HepG2 (cell line): ENCODE measurements at regions of chr2 and their contacts with region 1.

Region 1: GRCh38 chr2:86440631-86441391 is at the start of gene KDM3A:
- DNase-seq: peak; percentile 99
- ATAC-seq: peak; percentile 92
- H3K4me3 ChIP-seq: peak within 1 kb of the TSS; percentile 70 to 97 (median 81)
- H3K27ac ChIP-seq: peak within 1 kb of the TSS; percentile 98
- H3K4me1 ChIP-seq: peaks cover 36% of the 10 kb centered on the region
- H3K27me3 ChIP-seq: peaks cover 0 to 4% of the 10 kb centered on the region in 2 experiments; a peak in 1 of 5 replicates
- CTCF ChIP-seq: no peak
- EP300 ChIP-seq: peak; percentile 62 to 75; a peak in 3 of 4 replicates
- POLR2A ChIP-seq: peak in 1 of 2 experiments; percentile 40; a peak in 1 of 4 replicates
- RAD21 ChIP-seq: peak; percentile 46; the same call in 1 of the 2 replicates
- total RNA-seq, gene KDM3A: 21.0 and 30.8 TPM in 2 replicates

Region 2: GRCh38 chr2:86105252-86105968 is 335.4 kb before region 1 on chr2 and contains the start of gene POLR1A:
- CTCF ChIA-PET with region 1: no interaction called
- POLR2A ChIA-PET with region 1: interaction called, 11 read pairs
- in situ Hi-C with region 1: no loop called
- intact Hi-C with region 1: loop called (anchors 5 kb)
- DNase-seq: peak; percentile 94
- ATAC-seq: peak; percentile 98
- H3K4me3 ChIP-seq: peak within 1 kb of the TSS; percentile 88 to 96 (median 93)
- H3K27ac ChIP-seq: peak within 1 kb of the TSS; percentile 81
- H3K4me1 ChIP-seq: peaks cover 46% of the 10 kb centered on the region
- H3K27me3 ChIP-seq: peaks cover 0 to 4% of the 10 kb centered on the region in 2 experiments; a peak in 2 of 5 replicates
- CTCF ChIP-seq: no peak
- EP300 ChIP-seq: no peak
- POLR2A ChIP-seq: no peak
- RAD21 ChIP-seq: no peak
- total RNA-seq, gene POLR1A: 39.9 and 61.1 TPM in 2 replicates

Region 3: DNA sequence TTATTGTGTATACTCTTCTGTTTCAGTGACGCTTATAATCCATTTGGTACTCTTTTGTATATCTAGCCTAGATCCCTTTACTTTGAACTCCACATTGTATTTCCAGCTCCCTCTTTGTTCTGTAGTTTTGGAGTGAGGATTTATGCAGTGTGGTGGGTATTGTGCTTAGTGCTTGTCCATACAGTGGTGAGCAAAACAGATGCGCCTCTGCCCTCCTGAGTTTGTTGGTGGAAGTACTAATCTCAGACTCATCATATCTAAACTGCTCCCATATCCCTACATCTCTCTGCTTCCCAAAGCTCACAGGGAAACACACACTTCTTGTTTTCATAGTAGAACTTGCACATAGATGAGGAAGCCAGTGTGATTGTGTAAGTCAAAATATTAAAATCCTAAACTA is 322.7 kb before region 1 on chr2:
- CTCF ChIA-PET with region 1: no interaction called
- POLR2A ChIA-PET with region 1: no interaction called
- in situ Hi-C with region 1: no loop called
- intact Hi-C with region 1: no loop called
- DNase-seq: no peak
- ATAC-seq: peak; percentile 62
- H3K4me3 ChIP-seq: no peak overlapping the region
- H3K27ac ChIP-seq: no peak overlapping the region
- H3K4me1 ChIP-seq: peaks cover 15% of the 10 kb centered on the region
- H3K27me3 ChIP-seq: no peaks in the 10 kb centered on the region
- CTCF ChIP-seq: peak; percentile 13; the same call in 1 of the 2 replicates
- EP300 ChIP-seq: no peak
- POLR2A ChIP-seq: no peak
- RAD21 ChIP-seq: no peak

Region 4: DNA sequence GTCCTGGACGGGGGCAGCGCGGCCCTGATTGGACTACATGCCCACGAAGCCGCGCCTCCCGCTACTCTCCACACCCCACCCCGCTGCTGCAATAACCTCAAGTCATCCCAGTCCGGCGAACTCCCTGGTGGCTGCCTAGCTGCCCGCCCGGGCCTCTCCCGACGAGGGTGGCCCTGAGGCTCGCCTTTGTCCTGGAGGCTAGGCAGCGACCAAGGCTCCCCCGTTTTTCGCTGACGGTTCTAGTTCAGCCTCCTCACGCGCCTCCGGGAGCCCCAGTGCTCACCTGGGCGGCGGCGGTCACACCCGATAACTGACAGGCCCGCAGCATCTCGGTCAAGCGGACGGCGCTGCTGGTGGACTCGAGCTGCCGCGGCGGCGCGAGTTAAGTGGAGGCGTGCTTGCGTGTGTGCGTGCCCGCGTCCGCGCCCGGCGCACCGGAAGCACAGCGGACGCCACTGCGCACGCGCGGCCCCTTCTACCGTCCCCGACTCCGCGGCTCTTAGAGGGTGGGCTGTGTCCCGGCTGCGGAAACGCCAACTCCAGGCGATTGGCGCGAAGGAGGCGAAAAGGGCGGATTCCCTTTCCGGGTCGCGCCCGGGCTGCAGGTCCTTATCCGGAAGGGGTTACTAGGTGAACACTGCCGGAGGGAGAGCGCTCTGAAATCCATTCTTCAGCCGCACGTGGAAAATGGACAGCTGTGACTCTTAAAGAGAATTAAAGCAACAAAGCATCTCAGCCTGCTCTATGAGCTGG is 245.6 kb before region 1 on chr2 and contains the start of gene IMMT:
- CTCF ChIA-PET with region 1: no interaction called
- POLR2A ChIA-PET with region 1: interaction called, 18 read pairs
- in situ Hi-C with region 1: no loop called
- intact Hi-C with region 1: loop called (anchors 1 kb)
- DNase-seq: peak; percentile 97
- ATAC-seq: peak; percentile 95
- H3K4me3 ChIP-seq: peak within 1 kb of the TSS; percentile 81 to 96 (median 91)
- H3K27ac ChIP-seq: peak within 1 kb of the TSS; percentile 95
- H3K4me1 ChIP-seq: peaks cover 53% of the 10 kb centered on the region
- H3K27me3 ChIP-seq: no peaks in the 10 kb centered on the region; a peak in 1 of 5 replicates
- CTCF ChIP-seq: no peak; the same call in 1 of the 2 replicates
- EP300 ChIP-seq: 0 out of 4 replicates have a peak, but pooled peaks of 1 of the 2 experiments have one; percentile 63
- POLR2A ChIP-seq: peak; percentile 92 to 95
- RAD21 ChIP-seq: peak; percentile 67
- total RNA-seq, gene IMMT: 119 and 174 TPM in 2 replicates

Region 5: DNA sequence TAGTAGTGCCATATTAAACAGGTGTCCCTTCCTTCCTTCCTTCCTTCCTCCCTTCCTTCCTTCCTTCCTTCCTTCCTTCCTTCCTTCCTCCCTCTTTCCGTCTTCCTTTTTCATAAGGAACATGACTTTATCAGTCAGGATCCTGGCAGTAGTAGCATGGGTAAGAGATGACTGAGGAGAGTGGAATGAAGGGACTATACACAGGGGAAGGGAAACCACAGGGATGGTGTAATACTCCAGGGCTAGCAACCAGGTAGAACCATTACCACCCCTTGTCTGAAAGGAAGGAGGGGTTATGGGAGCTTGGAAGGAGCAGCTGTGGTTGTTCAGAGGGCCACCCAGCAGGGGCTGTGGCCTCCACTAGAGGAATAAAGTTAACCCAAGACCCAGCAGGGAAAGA is 22.9 kb before region 1 on chr2:
- CTCF ChIA-PET with region 1: no interaction called
- POLR2A ChIA-PET with region 1: no interaction called
- in situ Hi-C with region 1: no loop called
- intact Hi-C with region 1: no loop called
- DNase-seq: no peak
- ATAC-seq: no peak
- H3K4me3 ChIP-seq: no peak overlapping the region
- H3K27ac ChIP-seq: no peak overlapping the region
- H3K4me1 ChIP-seq: no peaks in the 10 kb centered on the region
- H3K27me3 ChIP-seq: peaks cover 0 to 22% of the 10 kb centered on the region in 2 experiments; a peak in 2 of 5 replicates
- CTCF ChIP-seq: no peak
- EP300 ChIP-seq: no peak
- POLR2A ChIP-seq: no peak
- RAD21 ChIP-seq: no peak

Region 6: DNA sequence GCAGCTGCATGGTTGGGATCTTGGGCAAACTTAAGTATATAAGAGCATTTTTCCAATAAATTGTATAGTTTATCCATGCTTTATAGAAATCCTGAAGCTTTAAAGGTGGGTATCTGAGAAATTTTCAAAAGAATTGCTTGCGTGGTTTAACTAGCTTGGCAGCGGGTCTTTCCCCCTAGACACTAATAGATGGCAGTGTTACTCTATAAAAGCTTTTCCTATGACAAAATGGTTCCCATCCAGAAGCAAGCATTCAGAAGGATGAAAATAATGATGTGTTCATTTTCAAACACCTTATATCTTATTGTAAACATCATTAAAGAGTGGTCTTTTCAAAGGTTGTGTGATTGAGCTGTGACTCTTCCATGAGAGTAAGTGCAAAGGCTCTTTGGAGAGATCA is 46.3 kb after region 1 on chr2:
- CTCF ChIA-PET with region 1: no interaction called
- POLR2A ChIA-PET with region 1: interaction called, 12 read pairs
- in situ Hi-C with region 1: no loop called
- intact Hi-C with region 1: no loop called
- DNase-seq: no peak
- ATAC-seq: no peak
- H3K4me3 ChIP-seq: no peak overlapping the region
- H3K27ac ChIP-seq: no peak overlapping the region
- H3K4me1 ChIP-seq: peaks cover 21% of the 10 kb centered on the region
- H3K27me3 ChIP-seq: no peaks in the 10 kb centered on the region
- CTCF ChIP-seq: peak; percentile 33; the same call in 1 of the 2 replicates
- EP300 ChIP-seq: no peak
- POLR2A ChIP-seq: no peak
- RAD21 ChIP-seq: no peak

Region 7: DNA sequence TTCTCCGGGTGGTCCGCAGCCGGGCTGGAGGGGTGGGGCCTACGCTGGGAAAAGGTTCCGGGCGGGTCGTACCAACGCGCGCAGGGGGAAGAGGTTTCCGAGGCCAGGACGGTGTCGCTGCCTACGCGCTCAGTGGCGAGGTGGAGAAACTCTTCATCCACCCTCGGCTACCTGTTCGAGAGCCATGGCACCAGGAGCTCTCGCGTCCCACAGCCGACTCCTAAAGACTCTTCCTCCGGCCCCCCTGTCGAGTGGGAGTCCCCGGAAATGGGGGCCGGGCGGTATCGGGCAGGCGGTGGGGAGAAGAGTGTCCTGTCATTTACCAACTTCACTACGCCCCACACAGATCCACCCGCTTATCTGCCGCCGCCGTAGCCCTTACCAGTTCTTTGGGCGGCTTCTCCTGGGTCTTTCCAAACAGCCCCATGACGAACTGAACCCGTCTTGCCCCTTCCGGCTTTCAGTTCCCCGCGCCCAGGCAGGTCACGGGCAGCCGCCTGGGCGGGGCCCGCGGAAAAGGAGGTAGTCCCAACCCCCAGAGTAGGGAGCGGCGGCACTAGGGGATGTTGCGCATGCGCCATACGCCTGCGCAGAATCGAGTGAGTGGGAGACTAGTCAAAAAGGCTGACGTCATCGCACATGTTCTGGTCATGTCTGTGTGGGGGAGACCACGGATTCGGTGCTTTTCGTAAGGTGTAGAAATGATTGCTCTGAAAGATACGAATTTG is 122.3 kb after region 1 on chr2 and contains the start of gene CHMP3:
- CTCF ChIA-PET with region 1: no interaction called
- POLR2A ChIA-PET with region 1: interaction called, 14 read pairs
- in situ Hi-C with region 1: no loop called
- intact Hi-C with region 1: loop called (anchors 1 kb)
- DNase-seq: peak; percentile 97
- ATAC-seq: peak; percentile 92
- H3K4me3 ChIP-seq: peak within 1 kb of the TSS; percentile 75 to 91 (median 88)
- H3K27ac ChIP-seq: peak within 1 kb of the TSS; percentile 97
- H3K4me1 ChIP-seq: peaks cover 40% of the 10 kb centered on the region
- H3K27me3 ChIP-seq: no peaks in the 10 kb centered on the region; a peak in 1 of 5 replicates
- CTCF ChIP-seq: 0 out of 2 replicates have a peak, but pooled peaks have one; percentile 16
- EP300 ChIP-seq: no peak
- POLR2A ChIP-seq: peak; percentile 79 to 87
- RAD21 ChIP-seq: 0 out of 2 replicates have a peak, but pooled peaks have one; percentile 28
- total RNA-seq, gene CHMP3: 114 and 154 TPM in 2 replicates

Region 8: DNA sequence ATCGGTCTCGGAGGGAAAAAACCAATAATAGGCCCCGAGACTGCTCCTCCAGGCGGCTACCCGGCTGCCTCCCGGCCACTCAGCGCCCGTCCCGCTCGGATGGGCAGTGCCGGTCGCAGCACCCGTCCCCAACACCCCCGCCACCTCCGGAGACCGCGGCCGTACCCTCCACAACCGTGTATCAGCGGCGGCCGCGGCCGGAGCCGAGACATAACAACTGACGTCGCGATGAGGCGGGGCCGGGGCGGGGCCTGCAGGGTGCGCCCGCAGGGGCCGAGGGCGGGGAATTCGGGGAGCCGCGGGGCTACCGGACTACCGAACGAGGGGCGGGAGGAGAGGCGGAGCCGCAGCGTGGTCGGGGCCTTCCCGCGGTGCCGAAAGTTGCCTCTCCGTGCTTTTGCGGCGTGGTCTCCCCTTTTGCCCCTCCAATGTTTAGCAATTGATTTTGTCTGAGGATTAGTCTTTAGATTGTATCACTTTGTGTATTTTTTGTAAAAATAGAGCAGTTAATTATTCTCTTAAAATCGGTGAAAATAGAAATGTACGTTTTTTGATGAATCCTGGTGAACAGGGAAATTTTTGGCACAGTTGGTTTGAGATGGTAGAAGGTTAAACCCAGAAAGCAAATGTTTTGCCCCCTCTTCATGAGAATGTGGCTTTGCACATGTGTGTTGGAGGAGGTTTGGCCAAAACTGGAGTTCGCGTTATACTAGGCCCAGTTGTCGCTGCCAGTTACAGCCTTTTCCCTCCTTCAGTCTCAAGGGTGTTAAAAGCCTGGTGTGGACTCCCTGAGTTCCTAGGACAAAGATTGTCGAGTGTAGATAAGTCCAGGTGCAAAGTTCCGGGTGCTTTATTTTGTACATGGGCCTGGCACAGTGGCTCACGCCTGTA is 183.1 kb after region 1 on chr2 and contains the start of gene RNF103:
- CTCF ChIA-PET with region 1: no interaction called
- POLR2A ChIA-PET with region 1: interaction called, 8 read pairs
- in situ Hi-C with region 1: no loop called
- intact Hi-C with region 1: loop called (anchors 5 kb)
- DNase-seq: peak; percentile 88
- ATAC-seq: peak; percentile 92
- H3K4me3 ChIP-seq: peak within 1 kb of the TSS; percentile 67 to 89 (median 87)
- H3K27ac ChIP-seq: peak within 1 kb of the TSS; percentile 90
- H3K4me1 ChIP-seq: peaks cover 62% of the 10 kb centered on the region
- H3K27me3 ChIP-seq: no peaks in the 10 kb centered on the region; a peak in 1 of 5 replicates
- CTCF ChIP-seq: peak; percentile 15; the same call in 1 of the 2 replicates
- EP300 ChIP-seq: peak in 1 of 2 experiments; percentile 36; a peak in 2 of 4 replicates
- POLR2A ChIP-seq: peak; percentile 90 to 98
- RAD21 ChIP-seq: no peak; the same call in 1 of the 2 replicates
- total RNA-seq, gene RNF103: 12.6 and 19.8 TPM in 2 replicates

Region 9: GRCh38 chr2:86764661-86765307 is 324.0 kb after region 1 on chr2:
- CTCF ChIA-PET with region 1: no interaction called
- POLR2A ChIA-PET with region 1: no interaction called
- in situ Hi-C with region 1: no loop called
- intact Hi-C with region 1: no loop called
- DNase-seq: peak; percentile 43
- ATAC-seq: peak; percentile 89
- H3K4me3 ChIP-seq: no peak overlapping the region
- H3K27ac ChIP-seq: no peak overlapping the region
- H3K4me1 ChIP-seq: no peaks in the 10 kb centered on the region
- H3K27me3 ChIP-seq: no peaks in the 10 kb centered on the region
- CTCF ChIP-seq: peak; percentile 76
- EP300 ChIP-seq: no peak
- POLR2A ChIP-seq: no peak
- RAD21 ChIP-seq: peak; percentile 72